ENCODE measurements at regions of chr1 and their contacts with region 1.

Region 1: GRCh38 chr1:228717081-228717480 is 18.2 kb upstream of the RHOU start:
- DNase-seq: no peak
- ATAC-seq: no peak
- H3K4me3 ChIP-seq: no peak overlapping the region
- H3K27ac ChIP-seq: no peak overlapping the region
- H3K4me1 ChIP-seq: no peaks in the 10 kb centered on the region
- H3K27me3 ChIP-seq: no peaks in the 10 kb centered on the region
- CTCF ChIP-seq: no peak

Region 2: DNA sequence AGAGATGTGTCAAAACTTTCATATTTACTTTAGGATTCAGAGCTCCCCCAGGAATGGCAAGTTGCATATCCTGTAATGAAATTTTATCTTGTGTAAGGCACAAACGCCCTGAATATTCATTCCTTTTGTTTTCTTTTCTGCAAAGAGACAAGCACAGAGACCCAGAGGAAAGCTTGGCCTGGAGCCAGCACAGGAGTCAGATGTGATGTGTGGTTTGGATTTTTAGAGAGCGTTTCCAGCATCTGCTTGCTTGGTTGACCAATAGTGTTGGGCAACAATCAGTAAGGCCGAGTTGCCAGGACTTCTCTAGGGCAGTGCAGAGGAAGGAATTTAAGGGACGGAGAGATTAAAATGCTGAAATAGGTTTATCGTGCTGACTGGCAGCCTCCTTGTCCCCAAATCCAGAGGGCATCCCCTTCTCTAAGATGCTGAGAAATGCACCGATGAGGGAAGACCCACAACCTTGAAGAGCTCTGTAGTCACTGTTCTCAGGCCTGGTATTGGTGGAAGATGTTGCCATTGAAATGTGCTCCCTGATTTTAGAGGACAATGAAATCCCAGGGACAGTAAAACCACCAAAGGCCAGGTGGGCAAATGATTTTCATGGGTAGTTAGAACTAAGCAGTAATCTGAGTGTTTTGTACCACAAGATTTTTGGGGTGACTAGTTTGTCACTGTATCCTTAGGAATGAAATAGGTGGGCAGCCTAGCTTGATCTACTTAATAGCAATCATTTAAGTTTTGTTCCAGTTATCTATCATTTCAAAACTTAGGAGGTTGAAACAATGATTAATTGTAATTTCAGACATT is 19.7 kb before region 1 on chr1:
- intact Hi-C with region 1: loop called in 1 of 2 experiments (anchors 2 kb)
- DNase-seq: peak; percentile 67 to 85
- ATAC-seq: peak in 3 of 4 donors; percentile 61 to 73 (median 62)
- H3K4me3 ChIP-seq: no peak overlapping the region
- H3K27ac ChIP-seq: no peak overlapping the region
- H3K4me1 ChIP-seq: no peaks in the 10 kb centered on the region
- H3K27me3 ChIP-seq: peaks cover 0 to 2% (median 0%) of the 10 kb centered on the region in 3 donors
- CTCF ChIP-seq: no peak

Measured in psoas muscle (tissue), 8 donors.